ENCODE measurements at regions of chr11 and their contacts with region 1.

Region 1: DNA sequence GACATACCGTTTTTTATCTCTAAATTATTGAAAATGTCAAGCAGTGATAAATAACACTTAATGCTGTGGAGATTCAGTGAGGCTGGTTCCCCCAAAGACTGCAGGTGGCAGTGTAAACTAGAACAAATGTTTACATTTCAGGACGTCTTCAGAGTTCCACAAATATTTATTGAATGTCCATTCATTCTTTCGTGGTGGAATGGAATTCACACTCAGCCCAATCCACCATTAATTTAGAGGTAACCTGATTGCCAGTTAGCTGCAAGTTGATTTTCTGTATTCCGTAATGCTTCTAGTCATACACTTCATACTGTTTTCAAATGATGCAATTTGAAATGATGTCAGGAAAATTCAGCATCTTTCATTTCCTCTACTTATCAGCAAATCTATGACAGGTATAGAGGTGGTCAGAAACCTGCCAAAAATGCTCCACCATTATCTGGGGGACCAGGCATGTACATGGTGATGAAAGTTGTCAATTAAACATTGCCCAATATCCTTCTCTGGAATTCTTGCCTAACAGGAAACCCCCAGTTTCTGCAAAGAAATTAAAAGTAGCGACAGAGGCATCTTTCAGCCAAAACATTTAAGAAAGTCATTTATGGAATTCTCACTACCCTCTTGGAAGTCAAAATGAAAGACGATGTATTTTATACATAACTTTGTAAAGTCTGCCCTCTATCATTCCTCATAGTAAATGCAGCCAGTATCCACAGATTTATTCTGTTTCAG is 94.3 kb upstream of the BMAL1 start:
- DNase-seq: no peak
- H3K4me3 ChIP-seq: no peak overlapping the region
- H3K27ac ChIP-seq: no peak overlapping the region
- H3K4me1 ChIP-seq: no peaks in the 10 kb centered on the region
- H3K27me3 ChIP-seq: no peaks in the 10 kb centered on the region
- CTCF ChIP-seq: peak in 2 of 4 experiments; percentile 49 to 59
- POLR2A ChIP-seq: no peak

Region 2: DNA sequence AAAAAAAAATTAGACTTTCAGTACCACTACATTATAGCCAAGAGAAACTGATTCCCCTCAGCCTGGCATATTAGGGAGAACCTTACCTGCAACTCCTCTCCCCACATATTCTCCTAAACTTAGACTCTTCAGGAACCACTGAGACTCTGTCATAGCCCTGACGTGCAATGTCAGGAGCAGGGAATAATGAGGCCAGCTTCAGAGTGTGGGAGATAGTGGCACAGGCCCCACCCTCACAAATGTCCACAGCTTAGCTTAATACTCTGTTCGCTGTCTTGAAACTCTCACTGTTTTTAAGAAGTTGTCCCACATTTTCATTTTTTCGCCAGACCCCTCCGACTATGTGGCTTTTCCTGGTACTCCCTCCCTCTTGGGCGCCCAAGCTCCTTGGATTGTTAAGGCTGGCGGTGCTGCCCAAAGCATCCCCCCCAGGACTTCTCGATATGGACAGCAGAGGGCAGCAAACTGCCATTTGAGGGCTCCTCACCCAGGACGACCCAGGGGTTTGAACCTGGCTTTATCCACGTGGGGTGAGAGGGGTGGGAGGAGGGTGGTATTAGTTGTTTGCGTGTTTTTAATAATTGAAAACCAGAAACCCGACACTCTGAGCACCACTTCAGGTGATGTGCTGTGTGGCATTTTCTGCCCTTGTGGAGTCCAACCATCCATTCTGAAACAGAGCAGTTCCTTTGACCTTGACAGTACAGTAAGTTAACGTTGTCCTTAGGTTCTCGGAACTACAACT is 219.3 kb before region 1 on chr11:
- intact Hi-C with region 1: loop called (anchors 5 kb)
- DNase-seq: peak; percentile 61
- H3K4me3 ChIP-seq: no peak overlapping the region
- H3K27ac ChIP-seq: no peak overlapping the region
- H3K4me1 ChIP-seq: no peaks in the 10 kb centered on the region
- H3K27me3 ChIP-seq: no peaks in the 10 kb centered on the region
- CTCF ChIP-seq: peak; percentile 63 to 91 (median 84)
- POLR2A ChIP-seq: no peak

Region 3: DNA sequence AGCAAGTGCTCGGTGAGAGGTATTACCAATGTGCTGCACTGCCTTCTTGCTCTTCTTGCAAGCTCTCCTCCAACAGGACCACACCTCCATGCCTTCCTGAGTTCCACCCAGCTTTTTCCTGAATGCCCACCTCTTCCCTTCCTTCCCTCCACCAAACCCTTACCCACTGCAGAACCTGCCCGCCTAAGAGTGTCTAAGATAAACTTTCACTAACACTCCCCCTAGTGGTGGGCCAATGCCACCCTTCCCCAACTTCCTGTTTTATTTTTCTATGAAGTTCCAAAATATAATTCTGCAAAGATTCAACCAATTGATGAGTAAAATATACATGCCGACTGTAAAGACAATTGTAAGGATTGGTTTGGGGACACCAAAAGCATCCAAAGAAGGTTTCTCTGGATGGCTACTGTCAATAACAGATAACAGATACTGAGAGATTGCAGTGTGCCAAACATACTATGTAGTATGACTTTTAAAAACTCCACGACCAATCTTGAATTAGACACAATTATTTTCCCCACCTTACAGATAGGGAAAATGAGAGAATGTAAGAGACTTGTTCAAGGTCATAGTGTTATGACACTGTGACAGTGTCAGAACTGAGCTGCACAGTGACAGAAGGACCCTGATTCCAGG is 55.7 kb after region 1 on chr11:
- intact Hi-C with region 1: no loop called
- DNase-seq: no peak
- H3K4me3 ChIP-seq: no peak overlapping the region
- H3K27ac ChIP-seq: no peak overlapping the region
- H3K4me1 ChIP-seq: no peaks in the 10 kb centered on the region
- H3K27me3 ChIP-seq: no peaks in the 10 kb centered on the region
- CTCF ChIP-seq: peak; percentile 50 to 64 (median 58)
- POLR2A ChIP-seq: no peak